CD4-positive, alpha-beta T cell (primary cell): ENCODE measurements at regions of chrX and their contacts with region 1.

Region 1: DNA sequence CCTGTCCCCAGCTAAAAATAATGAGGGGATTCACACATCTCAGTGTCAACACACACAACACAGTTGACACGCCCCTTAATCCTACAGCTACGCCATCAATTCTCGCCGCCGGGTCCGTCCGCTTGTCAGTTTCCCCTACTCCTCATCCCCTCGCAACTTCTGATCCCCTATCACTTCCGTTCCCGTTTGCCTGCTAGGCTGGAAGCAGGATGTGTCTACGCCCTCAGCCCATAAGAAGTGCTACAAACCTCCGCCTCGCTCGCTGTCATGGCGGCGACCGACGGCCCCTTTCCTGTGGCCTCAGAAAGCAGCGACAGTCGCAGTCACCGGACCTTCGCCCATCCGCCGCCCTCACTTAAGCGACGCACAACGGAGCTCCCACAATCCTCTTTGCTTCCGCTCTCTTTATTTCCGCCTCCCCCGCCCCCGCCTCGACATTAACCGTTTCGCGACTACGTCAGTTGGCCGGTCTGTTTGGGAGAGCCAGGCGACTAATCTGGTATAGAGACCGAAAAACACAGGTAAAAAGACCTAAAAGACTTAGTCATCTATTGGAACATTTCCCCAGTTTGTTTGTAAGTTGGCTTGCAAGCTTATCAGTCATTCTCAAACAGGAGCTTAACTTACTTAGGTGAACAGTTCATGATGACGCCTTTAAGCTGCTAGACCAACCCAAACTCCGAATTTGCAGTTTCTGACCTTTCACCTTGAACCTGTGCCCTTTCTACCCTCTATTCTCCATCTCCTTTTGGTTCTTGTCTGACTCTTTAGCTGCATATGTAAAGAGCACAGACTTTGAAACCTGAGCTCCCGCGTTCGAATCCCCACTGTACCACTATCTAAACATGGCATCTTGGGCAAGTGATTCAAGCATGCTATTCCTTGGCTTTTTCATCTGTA is at the start of gene SLC25A53:
- DNase-seq: peak; percentile 48 to 90 (median 66)
- ATAC-seq: peak; percentile 78
- H3K4me3 ChIP-seq: peak within 1 kb of the TSS; percentile 73
- H3K4me3 Mint-ChIP-seq: peak within 1 kb of the TSS; percentile 94
- H3K27ac ChIP-seq: peak within 1 kb of the TSS; percentile 75 to 83
- H3K27ac Mint-ChIP-seq: peak within 1 kb of the TSS; percentile 98
- H3K4me1 ChIP-seq: peaks cover 18% of the 10 kb centered on the region
- H3K4me1 Mint-ChIP-seq: peaks cover 21% of the 10 kb centered on the region
- H3K27me3 ChIP-seq: no peaks in the 10 kb centered on the region
- H3K27me3 Mint-ChIP-seq: no peaks in the 10 kb centered on the region
- CTCF ChIP-seq: no peak
- total RNA-seq, gene SLC25A53: 5.1 TPM

Region 2: DNA sequence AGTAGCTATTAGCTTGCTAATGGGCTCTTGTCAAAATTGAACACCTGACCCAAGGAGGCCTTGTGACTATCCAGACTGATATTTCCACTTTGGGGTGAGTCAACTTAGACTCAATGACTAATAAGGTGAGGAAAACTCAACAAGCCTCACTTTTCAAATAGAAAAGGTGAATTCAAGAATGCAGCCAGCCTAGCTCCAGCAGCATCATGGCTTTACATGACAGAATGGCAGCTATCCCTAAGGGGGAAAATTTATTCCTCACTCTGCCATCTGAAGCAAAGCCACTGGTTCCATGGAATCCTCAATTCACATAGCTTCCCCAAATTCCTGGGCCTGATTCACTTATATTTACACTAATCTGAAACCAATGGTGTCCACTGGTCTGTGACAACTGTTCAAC is 295.7 kb before region 1 on chrX:
- CTCF ChIA-PET with region 1: no interaction called
- POLR2A ChIA-PET with region 1: no interaction called
- intact Hi-C with region 1: no loop called
- DNase-seq: no peak
- ATAC-seq: no peak
- H3K4me3 ChIP-seq: no peak overlapping the region
- H3K4me3 Mint-ChIP-seq: no peak overlapping the region
- H3K27ac ChIP-seq: no peak overlapping the region
- H3K27ac Mint-ChIP-seq: no peak overlapping the region
- H3K4me1 ChIP-seq: no peaks in the 10 kb centered on the region
- H3K4me1 Mint-ChIP-seq: no peaks in the 10 kb centered on the region
- H3K27me3 ChIP-seq: no peaks in the 10 kb centered on the region
- H3K27me3 Mint-ChIP-seq: no peaks in the 10 kb centered on the region
- CTCF ChIP-seq: no peak

Region 3: DNA sequence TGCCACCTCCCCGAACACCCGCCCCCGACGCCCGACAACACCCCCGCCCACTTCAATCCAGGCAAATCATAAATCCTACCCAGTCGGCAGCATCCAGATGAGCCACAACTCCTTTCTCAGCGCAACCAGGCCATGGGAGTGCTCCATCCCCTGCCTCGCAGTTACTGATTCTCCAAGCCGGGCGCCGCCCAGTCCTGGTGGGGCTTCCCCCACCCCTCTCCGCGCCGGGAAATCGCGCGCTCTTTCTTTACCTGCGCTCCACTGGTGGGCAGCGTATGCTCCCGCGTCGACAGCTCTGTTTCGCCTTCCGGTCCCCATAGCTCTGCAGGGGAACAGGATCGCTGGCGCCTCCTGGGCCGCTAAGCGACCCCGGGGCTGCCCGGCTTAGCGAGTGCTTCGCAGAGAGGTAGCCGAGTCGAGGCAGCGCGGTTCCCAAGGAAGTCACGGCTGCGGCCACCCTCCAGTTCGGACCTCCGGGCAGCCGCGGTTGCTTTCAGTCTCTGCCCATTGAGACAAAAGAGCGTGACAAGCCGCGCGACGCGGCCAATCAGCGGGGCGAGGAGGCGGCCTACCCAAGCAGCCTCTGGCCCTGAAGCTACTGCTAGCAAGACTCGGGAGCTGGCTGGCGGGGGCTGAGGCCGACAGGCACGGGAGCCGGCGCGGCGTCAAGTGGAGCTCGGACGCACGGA is 238.2 kb before region 1 on chrX:
- CTCF ChIA-PET with region 1: no interaction called
- POLR2A ChIA-PET with region 1: interaction called, 15 read pairs
- intact Hi-C with region 1: no loop called
- DNase-seq: peak; percentile 18 to 79 (median 41)
- ATAC-seq: peak; percentile 74
- H3K4me3 ChIP-seq: peak overlapping the region; percentile 75
- H3K4me3 Mint-ChIP-seq: peak overlapping the region; percentile 90
- H3K27ac ChIP-seq: peak overlapping the region; percentile 53 to 75
- H3K27ac Mint-ChIP-seq: peak overlapping the region; percentile 95
- H3K4me1 ChIP-seq: peaks cover 25% of the 10 kb centered on the region
- H3K4me1 Mint-ChIP-seq: peaks cover 18% of the 10 kb centered on the region
- H3K27me3 ChIP-seq: no peaks in the 10 kb centered on the region
- H3K27me3 Mint-ChIP-seq: no peaks in the 10 kb centered on the region
- CTCF ChIP-seq: no peak

Region 4: DNA sequence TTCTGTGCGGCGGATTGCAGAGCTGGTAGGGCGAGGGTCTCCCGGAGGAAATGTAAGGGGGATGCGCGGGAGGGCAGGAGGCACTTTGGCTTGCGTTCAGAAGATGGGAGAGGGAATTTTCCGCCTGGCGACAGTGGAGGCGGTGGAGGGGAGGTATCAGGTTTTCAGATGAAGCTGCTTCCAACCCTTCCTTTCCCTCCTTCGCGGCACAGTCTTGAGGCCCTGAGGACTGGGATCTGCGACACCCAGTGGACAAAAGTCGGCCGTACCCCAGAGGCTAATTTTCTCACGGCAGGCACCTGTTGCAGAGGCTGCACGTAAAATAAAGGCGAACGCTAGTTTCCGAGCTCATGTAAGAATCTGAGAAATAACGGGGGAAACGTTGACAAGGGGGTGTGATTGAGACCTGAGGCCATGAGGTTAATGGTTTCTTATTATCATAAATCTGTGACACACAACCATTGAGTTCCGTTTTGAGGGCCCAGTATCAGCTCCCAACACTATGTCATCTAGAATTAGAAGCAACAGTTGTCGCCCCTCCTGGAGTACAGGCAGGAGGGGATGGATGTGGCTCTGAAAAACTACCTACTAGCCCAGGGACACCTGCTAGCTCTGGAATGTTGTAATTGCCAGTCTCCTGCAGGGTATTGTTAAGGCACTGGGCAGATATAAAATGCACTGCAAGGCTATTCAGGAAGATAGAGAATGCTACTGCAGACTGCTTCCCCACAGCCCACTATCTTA is 43.5 kb before region 1 on chrX:
- CTCF ChIA-PET with region 1: interaction called, 3 read pairs
- POLR2A ChIA-PET with region 1: interaction called, 19 read pairs
- intact Hi-C with region 1: loop called in 1 of 2 experiments (anchors 5 kb)
- DNase-seq: peak in 13 of 14 experiments; percentile 34 to 77 (median 47)
- ATAC-seq: peak; percentile 69
- H3K4me3 ChIP-seq: peak overlapping the region; percentile 72
- H3K4me3 Mint-ChIP-seq: peak overlapping the region; percentile 92
- H3K27ac ChIP-seq: no peak overlapping the region
- H3K27ac Mint-ChIP-seq: peak overlapping the region; percentile 89
- H3K4me1 ChIP-seq: peaks cover 42% of the 10 kb centered on the region
- H3K4me1 Mint-ChIP-seq: peaks cover 37% of the 10 kb centered on the region
- H3K27me3 ChIP-seq: no peaks in the 10 kb centered on the region
- H3K27me3 Mint-ChIP-seq: no peaks in the 10 kb centered on the region
- CTCF ChIP-seq: peak; percentile 37

Region 5: GRCh38 chrX:104122829-104123228 is 34.1 kb before region 1 on chrX:
- CTCF ChIA-PET with region 1: no interaction called
- POLR2A ChIA-PET with region 1: interaction called, 14 read pairs
- intact Hi-C with region 1: no loop called
- DNase-seq: peak in 3 of 14 experiments; percentile 16 to 31 (median 23)
- ATAC-seq: peak; percentile 93
- H3K4me3 ChIP-seq: no peak overlapping the region
- H3K4me3 Mint-ChIP-seq: peak overlapping the region; percentile 16
- H3K27ac ChIP-seq: no peak overlapping the region
- H3K27ac Mint-ChIP-seq: peak overlapping the region; percentile 89
- H3K4me1 ChIP-seq: peaks cover 12% of the 10 kb centered on the region
- H3K4me1 Mint-ChIP-seq: peaks cover 28% of the 10 kb centered on the region
- H3K27me3 ChIP-seq: no peaks in the 10 kb centered on the region
- H3K27me3 Mint-ChIP-seq: no peaks in the 10 kb centered on the region
- CTCF ChIP-seq: no peak

Region 6: DNA sequence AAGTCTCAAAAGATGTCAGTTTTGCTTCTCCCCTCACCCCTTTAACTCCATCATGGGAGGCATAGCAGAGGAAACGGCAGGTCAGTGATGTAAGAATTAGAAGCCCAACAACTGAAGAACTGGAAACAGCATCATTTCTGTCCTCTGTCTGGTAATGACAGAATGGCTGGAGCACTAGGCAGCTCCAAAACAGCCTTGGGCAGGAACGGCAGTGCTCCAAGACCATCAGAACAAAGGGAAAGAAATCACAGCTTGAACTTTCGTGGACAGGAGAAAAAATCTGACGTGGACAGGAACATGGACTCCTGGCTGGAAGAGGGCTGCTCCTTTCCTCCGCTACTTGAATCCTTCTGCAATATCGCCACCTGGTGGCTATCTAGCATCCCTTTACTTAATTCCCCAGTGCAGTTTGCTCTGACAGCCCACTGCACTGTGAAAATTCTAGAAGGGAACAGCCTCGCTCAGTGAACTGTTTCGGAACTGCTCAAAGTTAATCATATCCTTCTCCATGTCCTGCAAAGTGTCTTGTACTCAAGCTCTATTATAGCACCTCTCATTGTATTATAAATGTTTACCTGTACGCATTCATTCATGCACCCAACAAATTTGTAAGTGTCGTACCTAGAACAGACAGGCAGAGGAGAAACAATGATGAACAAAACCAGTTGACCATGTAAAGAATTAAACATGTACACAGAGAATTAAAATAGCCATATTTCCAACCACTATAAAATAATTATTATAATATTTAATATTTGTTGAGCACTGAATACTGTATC is 20.4 kb before region 1 on chrX:
- CTCF ChIA-PET with region 1: no interaction called
- POLR2A ChIA-PET with region 1: interaction called, 12 read pairs
- intact Hi-C with region 1: no loop called
- DNase-seq: peak in 13 of 14 experiments; percentile 24 to 81 (median 40)
- ATAC-seq: peak; percentile 78
- H3K4me3 ChIP-seq: no peak overlapping the region
- H3K4me3 Mint-ChIP-seq: no peak overlapping the region
- H3K27ac ChIP-seq: no peak overlapping the region
- H3K27ac Mint-ChIP-seq: no peak overlapping the region
- H3K4me1 ChIP-seq: peaks cover 10% of the 10 kb centered on the region
- H3K4me1 Mint-ChIP-seq: peaks cover 24% of the 10 kb centered on the region
- H3K27me3 ChIP-seq: no peaks in the 10 kb centered on the region
- H3K27me3 Mint-ChIP-seq: no peaks in the 10 kb centered on the region
- CTCF ChIP-seq: peak; percentile 75